Body of pancreas (tissue), 4 donors: ENCODE measurements at regions of chr1 and their contacts with region 1.

Region 1: GRCh38 chr1:147515046-147515869 is 26.0 kb upstream of the BCL9 start:
- DNase-seq: peak; percentile 49 to 85 (median 66)
- ATAC-seq: peak; percentile 99
- H3K4me3 ChIP-seq: no peak overlapping the region
- H3K27ac ChIP-seq: peak overlapping the region in 3 of 4 donors; percentile 36 to 66 (median 61)
- H3K4me1 ChIP-seq: peaks cover 9% of the 10 kb centered on the region
- H3K27me3 ChIP-seq: no peaks in the 10 kb centered on the region
- CTCF ChIP-seq: peak in 6 of 7 experiments; percentile 24 to 86 (median 76)
- POLR2A ChIP-seq: no peak

Region 2: DNA sequence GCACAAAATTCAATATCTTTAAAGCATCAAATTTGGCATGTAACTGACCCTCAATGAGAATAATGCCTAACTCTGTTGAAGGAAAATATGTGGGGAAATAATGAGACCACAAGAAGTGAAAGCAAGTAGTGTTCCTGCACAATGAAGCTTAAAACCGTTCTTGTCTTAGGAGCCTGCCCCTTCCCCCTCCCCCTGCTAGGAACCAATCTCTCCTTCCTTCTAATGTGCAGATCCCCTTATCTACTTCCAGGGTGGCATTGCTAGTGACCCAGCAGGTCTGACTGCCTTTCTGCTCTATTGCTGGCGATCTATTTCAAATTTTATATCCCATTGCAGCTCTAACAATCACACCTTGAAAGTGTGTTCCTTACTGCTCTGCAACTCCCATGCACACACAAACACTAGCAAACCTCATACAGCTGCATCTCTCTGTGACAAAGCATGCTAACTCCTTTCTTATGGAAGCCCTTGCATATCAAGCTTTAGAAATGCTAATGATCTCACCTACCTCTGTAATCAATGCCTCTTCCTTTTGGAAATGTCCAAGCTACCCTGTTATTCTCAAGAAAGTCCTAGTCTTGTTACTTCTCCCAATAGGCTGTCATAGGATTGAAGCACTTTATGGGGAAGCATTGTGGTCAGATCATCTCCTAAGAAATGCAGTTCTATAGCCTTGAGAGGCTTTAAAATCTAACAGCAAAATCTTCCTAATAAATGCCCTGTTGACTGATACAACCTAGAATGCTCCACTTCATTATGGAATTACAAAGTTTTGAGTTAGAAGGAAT is 52.5 kb after region 1 on chr1:
- intact Hi-C with region 1: no loop called
- DNase-seq: peak; percentile 34 to 72 (median 45)
- ATAC-seq: peak; percentile 71
- H3K4me3 ChIP-seq: no peak overlapping the region
- H3K27ac ChIP-seq: peak overlapping the region in 1 of 4 donors; percentile 11
- H3K4me1 ChIP-seq: peaks cover 7% of the 10 kb centered on the region
- H3K27me3 ChIP-seq: no peaks in the 10 kb centered on the region
- CTCF ChIP-seq: no peak
- POLR2A ChIP-seq: no peak

Region 3: DNA sequence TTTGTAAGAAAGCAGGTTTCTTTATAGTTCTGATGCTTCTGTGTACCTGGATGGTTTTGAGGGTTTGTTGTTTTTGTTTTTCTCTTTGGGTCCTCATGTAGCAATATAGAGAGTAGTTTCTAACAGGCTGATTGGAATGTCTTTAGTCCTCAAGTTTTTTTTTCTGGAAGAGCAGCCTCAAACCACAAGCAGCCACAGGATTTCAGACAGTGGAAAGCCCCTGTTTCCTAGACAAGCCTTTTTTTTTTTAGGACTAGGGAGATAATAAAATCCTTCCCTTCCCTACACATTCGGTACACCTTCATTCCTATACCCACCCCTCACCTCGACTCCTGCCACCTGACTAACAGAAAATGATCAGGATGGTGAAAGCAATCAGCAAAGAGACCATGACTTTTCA is 107.5 kb after region 1 on chr1:
- intact Hi-C with region 1: loop called (anchors 5 kb)
- DNase-seq: no peak
- ATAC-seq: no peak
- H3K4me3 ChIP-seq: no peak overlapping the region
- H3K27ac ChIP-seq: no peak overlapping the region
- H3K4me1 ChIP-seq: no peaks in the 10 kb centered on the region
- H3K27me3 ChIP-seq: no peaks in the 10 kb centered on the region
- CTCF ChIP-seq: no peak
- POLR2A ChIP-seq: no peak

Region 4: GRCh38 chr1:147635342-147635741 is 120.1 kb after region 1 on chr1:
- intact Hi-C with region 1: loop called (anchors 5 kb)
- DNase-seq: no peak
- ATAC-seq: no peak
- H3K4me3 ChIP-seq: no peak overlapping the region
- H3K27ac ChIP-seq: peak overlapping the region in 1 of 4 donors; percentile 15
- H3K4me1 ChIP-seq: no peaks in the 10 kb centered on the region
- H3K27me3 ChIP-seq: no peaks in the 10 kb centered on the region
- CTCF ChIP-seq: no peak
- POLR2A ChIP-seq: no peak

Region 5: GRCh38 chr1:147654549-147654948 is 139.3 kb after region 1 on chr1:
- intact Hi-C with region 1: no loop called
- DNase-seq: no peak
- ATAC-seq: no peak
- H3K4me3 ChIP-seq: no peak overlapping the region
- H3K27ac ChIP-seq: no peak overlapping the region
- H3K4me1 ChIP-seq: no peaks in the 10 kb centered on the region
- H3K27me3 ChIP-seq: no peaks in the 10 kb centered on the region
- CTCF ChIP-seq: no peak
- POLR2A ChIP-seq: no peak

Region 6: GRCh38 chr1:147748676-147749350 is 233.6 kb after region 1 on chr1:
- intact Hi-C with region 1: no loop called
- DNase-seq: no peak
- ATAC-seq: no peak
- H3K4me3 ChIP-seq: no peak overlapping the region
- H3K27ac ChIP-seq: no peak overlapping the region
- H3K4me1 ChIP-seq: no peaks in the 10 kb centered on the region
- H3K27me3 ChIP-seq: no peaks in the 10 kb centered on the region
- CTCF ChIP-seq: no peak
- POLR2A ChIP-seq: no peak